ENCODE measurements at regions of chr18 and their contacts with region 1.

Region 1: DNA sequence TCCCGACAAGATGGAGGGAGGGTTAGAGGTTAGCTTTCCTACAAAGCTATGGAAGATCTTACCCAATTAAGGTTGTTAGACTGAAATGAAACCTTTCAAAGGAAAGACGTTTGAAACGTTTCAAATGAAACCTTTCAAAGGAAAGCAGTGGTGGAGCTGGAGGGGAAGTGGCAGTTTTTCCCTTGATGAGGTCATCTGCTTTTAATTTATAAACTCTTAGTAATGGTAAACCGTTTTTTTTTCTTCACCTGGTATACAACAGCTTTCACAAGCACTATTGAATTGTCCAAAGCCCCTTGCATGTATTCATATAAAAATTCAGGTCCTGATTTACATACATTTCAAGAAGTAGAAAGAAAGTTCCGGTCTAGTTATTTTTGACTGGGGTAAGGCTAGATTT is 7.4 kb downstream of the PMAIP1 start:
- DNase-seq: no peak
- H3K4me3 Mint-ChIP-seq: peak overlapping the region; percentile 50
- H3K27ac Mint-ChIP-seq: peak overlapping the region; percentile 84
- H3K4me1 Mint-ChIP-seq: peaks cover 77% of the 10 kb centered on the region
- H3K27me3 Mint-ChIP-seq: no peaks in the 10 kb centered on the region

Region 2: DNA sequence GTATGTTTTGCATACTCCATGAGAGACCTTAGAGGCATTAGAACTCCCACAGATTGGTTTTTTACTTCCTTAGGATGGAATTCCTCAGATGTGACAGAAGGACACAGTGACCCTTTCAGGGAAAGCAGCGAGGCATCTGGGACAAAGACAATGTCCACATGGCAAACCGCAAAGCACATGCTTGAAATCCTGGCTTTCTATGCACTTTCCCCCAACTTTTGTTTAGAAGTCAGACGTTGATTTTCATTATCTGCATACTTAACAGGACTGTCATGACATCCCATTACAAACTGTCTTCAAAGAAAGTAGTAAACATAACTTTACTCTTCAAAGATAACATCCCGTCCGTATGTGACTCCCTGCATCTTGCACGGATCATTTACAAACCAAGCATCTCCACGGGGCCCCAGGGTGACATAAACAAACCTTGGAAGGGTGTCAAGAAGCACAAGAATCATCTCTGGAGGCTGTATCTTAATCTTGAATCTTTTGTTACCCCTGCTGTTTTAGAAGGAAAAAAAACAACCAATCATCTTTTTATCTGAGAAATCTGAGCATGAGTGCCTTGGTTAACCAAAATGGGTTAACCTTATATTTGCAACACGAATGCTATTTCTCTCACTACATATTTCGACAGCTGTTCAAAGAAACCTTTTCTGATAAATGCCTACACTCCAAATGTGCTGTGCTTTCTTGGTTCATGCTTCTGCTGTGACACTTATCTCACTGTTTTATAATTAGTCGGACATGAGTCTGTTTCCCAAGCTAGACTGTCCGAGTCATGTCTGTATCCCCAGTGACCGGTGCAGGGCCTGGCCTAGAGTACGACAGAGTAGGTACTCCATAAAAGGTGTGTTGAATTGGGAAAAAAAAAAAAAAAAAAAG is 300.7 kb before region 1 on chr18:
- intact Hi-C with region 1: no loop called
- DNase-seq: no peak
- H3K4me3 Mint-ChIP-seq: no peak overlapping the region
- H3K27ac Mint-ChIP-seq: no peak overlapping the region
- H3K4me1 Mint-ChIP-seq: no peaks in the 10 kb centered on the region
- H3K27me3 Mint-ChIP-seq: peaks cover 2% of the 10 kb centered on the region

Region 3: DNA sequence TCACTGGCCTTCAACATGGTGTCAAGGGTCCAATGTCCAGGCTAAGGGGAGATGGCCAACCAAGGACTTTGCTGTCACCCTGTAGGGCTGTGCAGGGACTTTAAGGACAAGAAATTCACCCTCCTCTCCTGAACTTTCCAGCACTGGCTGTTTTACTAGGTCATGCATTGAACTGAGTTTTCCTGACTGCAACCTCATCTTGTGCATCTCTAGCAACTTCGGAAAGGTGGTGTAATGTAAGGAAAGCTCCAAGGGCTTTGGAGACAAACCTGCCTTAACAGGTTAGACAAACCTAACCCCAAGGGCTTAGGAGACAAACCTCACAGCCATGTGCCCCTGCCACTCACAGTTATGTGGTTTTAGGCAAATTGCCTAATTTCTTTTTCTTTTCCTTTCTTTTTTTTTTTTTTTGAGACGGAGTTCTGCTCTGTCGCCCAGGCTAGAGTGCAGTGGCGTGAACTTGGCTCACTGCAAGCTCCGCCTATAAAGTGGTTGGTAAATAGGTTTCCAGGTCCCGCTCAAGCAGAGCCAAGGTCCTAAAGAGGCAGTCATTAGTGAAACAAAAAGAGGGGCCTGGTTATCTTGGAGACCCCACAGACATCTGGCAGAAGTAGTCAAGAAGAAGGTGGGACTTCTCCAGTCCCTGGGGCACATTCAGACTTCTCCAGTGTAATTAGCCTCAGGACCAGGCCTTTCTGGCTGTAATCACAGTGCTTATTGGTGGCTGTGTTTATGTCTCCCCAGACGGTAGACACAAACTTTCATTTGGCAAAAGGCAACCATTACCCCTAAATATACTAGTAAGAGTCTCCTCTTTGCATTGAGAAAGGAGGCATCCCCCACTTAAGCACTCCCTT is 45.0 kb before region 1 on chr18:
- intact Hi-C with region 1: no loop called
- DNase-seq: no peak
- H3K4me3 Mint-ChIP-seq: no peak overlapping the region
- H3K27ac Mint-ChIP-seq: no peak overlapping the region
- H3K4me1 Mint-ChIP-seq: no peaks in the 10 kb centered on the region
- H3K27me3 Mint-ChIP-seq: peaks cover 7% of the 10 kb centered on the region

Region 4: GRCh38 chr18:59921384-59921891 is 14.3 kb after region 1 on chr18:
- intact Hi-C with region 1: loop called (anchors 1 kb)
- DNase-seq: peak; percentile 46
- H3K4me3 Mint-ChIP-seq: peak overlapping the region; percentile 15
- H3K27ac Mint-ChIP-seq: peak overlapping the region; percentile 56
- H3K4me1 Mint-ChIP-seq: peaks cover 54% of the 10 kb centered on the region
- H3K27me3 Mint-ChIP-seq: no peaks in the 10 kb centered on the region